Dendritic cell treated with granulocyte-macrophage colony-stimulating factor and Interleukin-4, amounts not matched to agents 40 ng/mL and 50 ng/mL, for 4 days (primary cell): ENCODE measurements at regions of chr13 and their contacts with region 1.

Region 1: DNA sequence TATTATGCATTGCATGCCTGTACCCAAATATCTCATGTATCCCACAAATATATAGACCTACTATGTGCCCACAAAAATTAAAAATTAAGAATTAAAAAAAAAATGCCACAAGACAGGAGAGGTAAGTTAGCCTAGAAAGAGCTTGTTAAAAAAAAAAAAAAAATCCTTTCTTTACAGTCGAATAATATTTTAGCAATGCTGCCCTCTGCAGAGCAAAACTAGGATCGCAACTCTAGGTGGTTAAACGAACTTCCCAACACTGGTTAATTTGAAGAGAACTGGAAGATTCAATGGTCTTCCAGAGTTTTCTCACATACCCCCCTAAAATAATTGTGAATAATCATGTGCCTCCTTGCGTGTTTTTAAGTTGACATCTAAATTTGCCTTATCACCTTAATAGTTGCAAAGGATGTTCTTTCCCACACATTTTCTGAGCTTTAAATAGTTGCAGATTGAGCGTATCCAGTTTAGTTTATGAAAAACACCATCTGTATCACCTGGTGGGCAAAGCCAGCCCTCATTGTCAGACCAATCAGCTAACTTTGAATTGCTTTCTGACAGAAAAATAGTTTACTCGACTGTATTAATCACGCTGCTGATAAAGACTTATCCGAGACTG is 47.4 kb upstream of the RCBTB2 start:
- H3K4me3 Mint-ChIP-seq: no peak overlapping the region
- H3K27ac Mint-ChIP-seq: peak overlapping the region; percentile 94
- H3K4me1 Mint-ChIP-seq: peaks cover 63% of the 10 kb centered on the region
- H3K27me3 Mint-ChIP-seq: no peaks in the 10 kb centered on the region

Region 2: GRCh38 chr13:48126944-48127830 is 453.1 kb before region 1 on chr13:
- intact Hi-C with region 1: loop called (anchors 10 kb)
- H3K4me3 Mint-ChIP-seq: no peak overlapping the region
- H3K27ac Mint-ChIP-seq: peak overlapping the region; percentile 67
- H3K4me1 Mint-ChIP-seq: peaks cover 20% of the 10 kb centered on the region
- H3K27me3 Mint-ChIP-seq: peaks cover 1% of the 10 kb centered on the region

Region 3: DNA sequence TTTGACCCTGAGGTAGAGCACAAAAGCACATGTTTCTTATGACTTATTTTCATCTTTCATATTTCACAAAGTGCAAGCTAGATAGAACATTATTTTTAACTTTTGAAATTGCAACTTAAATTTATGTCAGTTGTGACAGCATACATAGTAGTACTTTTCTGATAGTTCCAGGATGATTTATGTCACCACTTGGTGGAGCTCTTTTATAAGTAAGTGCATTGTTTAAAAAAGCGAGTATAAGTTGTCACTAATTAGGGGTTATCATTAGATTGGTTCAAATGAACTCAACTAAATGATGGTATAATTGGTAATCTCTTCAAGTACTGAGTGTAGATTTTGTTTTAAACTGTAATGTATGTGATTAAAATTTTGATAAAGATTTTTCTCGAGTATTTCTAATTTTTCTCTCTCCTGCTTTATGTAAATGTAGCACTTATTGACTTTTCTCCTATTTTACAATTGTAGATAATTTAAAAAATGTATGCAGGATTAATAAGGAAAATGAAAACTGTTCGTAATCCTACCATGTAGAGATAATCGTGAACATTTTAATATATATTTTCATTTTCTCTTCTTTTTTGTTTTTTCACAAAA is 245.7 kb before region 1 on chr13:
- intact Hi-C with region 1: loop called (anchors 1 kb)
- H3K4me3 Mint-ChIP-seq: no peak overlapping the region
- H3K27ac Mint-ChIP-seq: no peak overlapping the region
- H3K4me1 Mint-ChIP-seq: peaks cover 29% of the 10 kb centered on the region
- H3K27me3 Mint-ChIP-seq: no peaks in the 10 kb centered on the region

Region 4: DNA sequence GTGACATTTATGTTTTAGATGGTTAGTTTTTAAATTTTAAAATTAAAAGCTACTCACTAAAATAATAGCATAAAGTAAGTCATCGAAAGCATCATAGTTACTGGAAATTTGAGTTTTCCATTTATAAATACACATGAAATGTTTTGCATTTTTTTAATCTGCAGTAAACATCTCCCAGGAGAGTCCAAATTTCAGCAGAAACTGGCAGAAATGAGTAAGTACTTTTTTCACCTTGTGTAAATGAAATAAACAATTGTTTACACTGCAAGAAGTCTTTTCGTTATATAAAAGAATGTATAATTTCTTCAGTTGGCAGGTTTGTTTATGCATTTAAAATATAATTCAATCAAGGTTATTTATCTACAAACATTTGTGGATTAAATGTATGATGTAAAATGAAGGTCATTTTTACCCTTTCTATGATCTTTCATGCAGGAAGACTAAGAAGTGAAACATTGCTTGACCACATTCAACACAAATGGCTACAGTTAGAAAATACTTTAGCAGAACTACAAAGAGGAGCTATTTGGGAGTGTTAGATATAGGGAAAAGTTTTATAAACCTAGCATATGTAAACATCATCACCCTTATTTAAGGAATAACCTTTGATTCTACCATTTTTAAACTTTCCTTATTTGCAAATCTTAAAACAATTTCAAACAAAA is 103.0 kb before region 1 on chr13:
- intact Hi-C with region 1: no loop called
- H3K4me3 Mint-ChIP-seq: peak overlapping the region; percentile 68
- H3K27ac Mint-ChIP-seq: peak overlapping the region; percentile 89
- H3K4me1 Mint-ChIP-seq: peaks cover 30% of the 10 kb centered on the region
- H3K27me3 Mint-ChIP-seq: no peaks in the 10 kb centered on the region

Region 5: DNA sequence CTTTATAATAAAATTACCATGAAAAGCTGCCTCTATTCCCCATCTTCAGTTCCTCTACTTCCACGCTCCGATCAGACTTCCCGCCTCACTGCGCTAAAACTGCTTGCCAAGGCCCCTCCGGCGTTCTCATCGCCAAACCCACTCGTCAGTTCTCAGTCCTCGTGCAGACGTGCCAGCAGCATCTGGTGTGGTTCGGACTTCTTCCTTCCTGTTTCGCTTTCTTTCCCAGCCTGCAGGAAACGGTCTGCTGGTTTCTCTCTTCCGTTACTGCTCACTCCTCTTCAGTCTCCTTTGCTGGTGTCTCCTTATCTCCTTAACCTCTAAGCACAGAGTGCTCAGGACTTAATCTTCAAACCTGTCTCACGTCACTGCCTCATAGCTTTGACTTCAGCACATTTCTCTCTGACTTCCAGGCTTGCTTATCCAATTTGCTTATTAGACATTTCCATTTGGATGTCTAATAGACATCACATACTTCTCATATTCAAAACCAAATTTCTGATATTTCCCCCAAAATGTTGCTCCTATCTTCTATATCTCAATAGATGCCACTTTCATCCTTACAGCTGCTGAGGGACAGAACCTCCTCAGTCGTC is 87.7 kb before region 1 on chr13:
- intact Hi-C with region 1: loop called (anchors 5 kb)
- H3K4me3 Mint-ChIP-seq: no peak overlapping the region
- H3K27ac Mint-ChIP-seq: no peak overlapping the region
- H3K4me1 Mint-ChIP-seq: peaks cover 23% of the 10 kb centered on the region
- H3K27me3 Mint-ChIP-seq: no peaks in the 10 kb centered on the region

Region 6: DNA sequence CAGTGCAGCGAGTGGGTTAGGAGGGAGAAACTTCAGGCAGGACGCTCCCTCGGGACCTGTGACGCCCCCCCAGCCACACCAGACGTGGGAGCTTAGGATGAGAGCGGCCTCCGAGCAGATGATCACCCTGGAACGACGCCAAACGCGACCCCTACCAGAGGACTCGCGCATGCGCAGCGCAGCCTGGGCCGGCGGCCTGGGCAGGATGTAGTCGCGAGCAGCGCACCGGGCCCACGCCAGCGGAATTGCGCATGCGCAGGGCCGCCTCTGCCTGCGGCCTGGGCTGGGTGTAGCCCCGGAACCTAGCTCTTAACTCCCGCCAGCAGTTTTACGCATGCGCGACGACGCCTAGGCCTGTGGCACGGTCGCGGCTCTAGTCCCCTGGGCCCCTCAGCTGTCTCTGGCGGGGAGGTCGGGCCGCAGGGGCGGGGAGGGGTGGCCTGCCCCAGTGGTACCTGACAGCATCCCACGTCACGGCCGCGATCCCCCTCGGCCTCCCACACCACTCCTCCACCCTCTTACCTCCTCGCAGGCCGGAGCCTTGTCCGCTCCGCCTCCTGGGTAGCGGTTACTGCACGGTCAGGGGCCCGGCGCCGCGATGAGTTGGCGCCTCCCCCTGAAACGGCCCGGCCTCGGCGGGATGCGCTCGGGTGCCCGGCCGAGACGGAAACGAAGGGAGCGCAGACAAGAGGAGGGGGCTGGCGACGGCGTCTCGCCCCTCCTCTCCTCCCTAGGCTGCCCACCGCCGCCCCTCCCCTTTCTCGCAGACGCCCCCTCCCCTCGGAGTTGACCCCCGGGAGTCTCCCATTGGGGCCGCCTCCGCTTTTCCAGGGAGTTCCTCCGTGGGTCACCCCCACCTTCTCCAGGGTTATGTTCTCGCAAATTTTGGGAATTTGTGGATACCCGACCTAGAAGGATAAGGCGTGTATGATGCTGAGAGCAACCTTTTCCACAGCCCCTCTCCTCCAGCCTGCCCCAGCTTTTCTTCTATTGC is 47.5 kb before region 1 on chr13 and contains the start of gene RCBTB2:
- intact Hi-C with region 1: loop called (anchors 2 kb)
- H3K4me3 Mint-ChIP-seq: peak within 1 kb of the TSS; percentile 83
- H3K27ac Mint-ChIP-seq: peak within 1 kb of the TSS; percentile 98
- H3K4me1 Mint-ChIP-seq: peaks cover 69% of the 10 kb centered on the region
- H3K27me3 Mint-ChIP-seq: no peaks in the 10 kb centered on the region

Region 7: DNA sequence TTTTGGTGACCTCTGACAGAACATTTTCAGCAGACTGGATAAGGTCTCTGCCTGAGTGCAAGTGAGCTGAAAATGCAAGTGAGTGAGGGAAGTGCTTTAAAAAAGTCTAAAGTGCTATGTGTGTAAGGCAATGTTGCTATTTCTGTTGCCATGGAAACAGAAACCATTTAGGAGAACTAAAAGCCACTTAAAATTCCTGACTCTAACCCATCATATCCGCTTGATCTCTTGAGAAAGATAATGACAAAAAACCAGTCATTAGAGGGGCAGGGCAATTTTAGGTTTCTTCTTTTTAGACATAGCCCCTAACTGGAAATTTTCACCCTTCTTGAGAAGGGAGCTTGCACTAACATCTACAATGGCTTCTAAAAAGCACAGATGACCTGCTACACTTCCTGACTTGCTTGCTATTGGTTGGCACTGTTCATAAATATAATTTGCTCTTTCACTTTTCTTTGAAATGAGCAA is 73.2 kb after region 1 on chr13 and contains the start of gene CYSLTR2:
- intact Hi-C with region 1: no loop called
- H3K4me3 Mint-ChIP-seq: peak within 1 kb of the TSS; percentile 69
- H3K27ac Mint-ChIP-seq: peak within 1 kb of the TSS; percentile 85
- H3K4me1 Mint-ChIP-seq: peaks cover 59% of the 10 kb centered on the region
- H3K27me3 Mint-ChIP-seq: no peaks in the 10 kb centered on the region

Region 8: GRCh38 chr13:48892053-48892690 is 311.9 kb after region 1 on chr13:
- intact Hi-C with region 1: no loop called
- H3K4me3 Mint-ChIP-seq: no peak overlapping the region
- H3K27ac Mint-ChIP-seq: no peak overlapping the region
- H3K4me1 Mint-ChIP-seq: peaks cover 23% of the 10 kb centered on the region
- H3K27me3 Mint-ChIP-seq: no peaks in the 10 kb centered on the region